Heart right ventricle (tissue), 16 donors: ENCODE measurements at regions of chrX and their contacts with region 1.

Region 1: GRCh38 chrX:73855546-73855945 is 292.5 kb downstream of the CHIC1 start:
- DNase-seq: peak; percentile 13 to 47
- ATAC-seq: peak in 3 of 8 donors; percentile 53 to 70 (median 64)
- H3K4me3 ChIP-seq: no peak overlapping the region
- H3K27ac ChIP-seq: no peak overlapping the region
- H3K4me1 ChIP-seq: no peaks in the 10 kb centered on the region
- H3K27me3 ChIP-seq: peaks cover 0 to 4% (median 0%) of the 10 kb centered on the region in 7 donors
- CTCF ChIP-seq: peak; percentile 40 to 80 (median 71)

Region 2: DNA sequence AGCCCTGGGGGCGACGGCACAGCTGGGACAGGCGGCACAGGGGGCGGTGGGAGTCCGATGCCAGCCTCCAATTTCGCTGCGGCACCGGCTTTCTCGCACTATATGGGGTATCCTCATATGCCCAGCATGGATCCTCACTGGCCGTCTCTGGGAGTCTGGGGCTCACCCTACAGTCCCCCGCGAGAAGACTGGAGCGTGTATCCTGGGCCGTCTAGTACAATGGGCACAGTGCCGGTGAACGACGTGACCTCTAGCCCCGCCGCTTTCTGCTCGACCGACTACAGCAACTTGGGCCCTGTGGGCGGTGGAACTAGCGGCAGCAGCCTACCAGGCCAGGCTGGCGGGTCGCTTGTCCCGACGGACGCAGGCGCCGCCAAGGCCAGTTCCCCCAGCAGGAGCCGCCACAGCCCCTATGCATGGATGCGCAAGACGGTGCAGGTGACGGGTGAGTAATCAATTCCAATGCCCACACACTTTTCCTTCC is 408.2 kb before region 1 on chrX:
- intact Hi-C with region 1: no loop called
- DNase-seq: no peak
- ATAC-seq: no peak
- H3K4me3 ChIP-seq: no peak overlapping the region
- H3K27ac ChIP-seq: no peak overlapping the region
- H3K4me1 ChIP-seq: no peaks in the 10 kb centered on the region
- H3K27me3 ChIP-seq: peaks cover 0 to 72% (median 13%) of the 10 kb centered on the region in 7 donors
- CTCF ChIP-seq: no peak

Region 3: GRCh38 chrX:73916931-73917667 is 61.6 kb after region 1 on chrX:
- intact Hi-C with region 1: no loop called
- DNase-seq: no peak
- ATAC-seq: no peak
- H3K4me3 ChIP-seq: no peak overlapping the region
- H3K27ac ChIP-seq: peak overlapping the region in 2 of 10 donors; percentile 15 to 37
- H3K4me1 ChIP-seq: peaks cover 0 to 8% (median 0%) of the 10 kb centered on the region in 9 donors
- H3K27me3 ChIP-seq: peaks cover 0 to 21% (median 0%) of the 10 kb centered on the region in 7 donors
- CTCF ChIP-seq: no peak

Region 4: GRCh38 chrX:74015379-74016019 is 160.0 kb after region 1 on chrX:
- intact Hi-C with region 1: loop called (anchors 1 to 10 kb)
- DNase-seq: peak in 1 of 2 donors; percentile 31
- ATAC-seq: peak; percentile 46 to 91 (median 72)
- H3K4me3 ChIP-seq: no peak overlapping the region
- H3K27ac ChIP-seq: no peak overlapping the region
- H3K4me1 ChIP-seq: no peaks in the 10 kb centered on the region
- H3K27me3 ChIP-seq: no peaks in the 10 kb centered on the region
- CTCF ChIP-seq: peak; percentile 34 to 89 (median 70)

Region 5: GRCh38 chrX:74138943-74139342 is 283.4 kb after region 1 on chrX:
- intact Hi-C with region 1: loop called in 7 of 10 experiments (anchors 2 to 10 kb)
- DNase-seq: no peak
- ATAC-seq: no peak
- H3K4me3 ChIP-seq: no peak overlapping the region
- H3K27ac ChIP-seq: no peak overlapping the region
- H3K4me1 ChIP-seq: no peaks in the 10 kb centered on the region
- H3K27me3 ChIP-seq: peaks cover 0 to 16% (median 0%) of the 10 kb centered on the region in 7 donors
- CTCF ChIP-seq: no peak

Region 6: DNA sequence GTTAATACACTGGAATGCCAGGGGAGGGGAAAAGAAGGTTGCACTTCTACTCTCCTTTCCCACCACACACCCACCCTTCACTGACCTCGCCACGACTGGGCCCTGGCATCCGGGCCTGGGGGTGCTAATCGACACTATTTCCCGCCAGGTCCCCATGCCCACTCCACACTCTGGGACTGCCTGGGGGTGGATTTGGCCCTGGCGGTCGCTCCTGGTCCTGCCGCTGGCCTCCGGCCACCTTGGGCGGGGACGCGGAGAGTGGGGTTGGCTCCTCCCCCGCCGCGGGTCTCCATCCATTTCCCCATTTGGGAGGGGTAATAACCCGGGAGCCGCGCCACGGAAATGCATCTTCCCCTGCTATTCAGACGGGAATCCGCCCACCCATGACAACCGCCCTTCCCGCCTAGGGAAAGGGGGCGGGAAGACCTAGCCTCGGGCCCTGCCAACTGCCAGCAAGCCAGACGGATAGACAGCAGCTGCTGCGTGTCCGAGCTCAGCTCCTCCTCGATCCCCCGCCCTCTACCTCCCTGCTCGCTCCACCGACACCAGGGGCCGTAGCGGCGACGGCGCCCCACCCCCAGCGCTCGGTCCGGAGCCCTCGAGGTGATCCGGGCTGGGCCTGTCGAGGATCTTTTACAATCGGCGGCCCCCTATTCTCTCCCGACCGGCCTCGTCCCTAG is 680.7 kb after region 1 on chrX:
- intact Hi-C with region 1: loop called in 2 of 10 experiments (anchors 10 kb)
- DNase-seq: peak; percentile 83 to 89
- ATAC-seq: peak; percentile 86 to 95 (median 92)
- H3K4me3 ChIP-seq: peak overlapping the region; percentile 25 to 61 (median 56)
- H3K27ac ChIP-seq: peak overlapping the region; percentile 74 to 94 (median 87)
- H3K4me1 ChIP-seq: peaks cover 0 to 16% (median 6%) of the 10 kb centered on the region in 9 donors
- H3K27me3 ChIP-seq: peaks cover 0 to 34% (median 0%) of the 10 kb centered on the region in 7 donors
- CTCF ChIP-seq: peak in 8 of 9 donors; percentile 20 to 53 (median 38)

Region 7: GRCh38 chrX:75603833-75604232 is 1748.3 kb after region 1 on chrX:
- intact Hi-C with region 1: loop called in 1 of 10 experiments (anchors 10 kb)
- DNase-seq: peak in 1 of 2 donors; percentile 4
- ATAC-seq: no peak
- H3K4me3 ChIP-seq: no peak overlapping the region
- H3K27ac ChIP-seq: no peak overlapping the region
- H3K4me1 ChIP-seq: peaks cover 0 to 5% (median 0%) of the 10 kb centered on the region in 9 donors
- H3K27me3 ChIP-seq: peaks cover 0 to 24% (median 0%) of the 10 kb centered on the region in 7 donors
- CTCF ChIP-seq: peak; percentile 44 to 77 (median 62)